Naive thymus-derived CD4-positive, alpha-beta T cell (primary cell): ENCODE measurements at regions of chr5 and their contacts with region 1.

Region 1: GRCh38 chr5:69369369-69370121 is at the starts of genes AK6, RAD17 and TAF9:
- DNase-seq: peak; percentile 90 to 99 (median 95)
- ATAC-seq: peak; percentile 95
- H3K4me3 ChIP-seq: peak within 1 kb of the TSS; percentile 97
- H3K4me3 Mint-ChIP-seq: peak within 1 kb of the TSS; percentile 91 to 100 (median 97)
- H3K27ac ChIP-seq: peak within 1 kb of the TSS; percentile 99
- H3K27ac Mint-ChIP-seq: peak within 1 kb of the TSS; percentile 95 to 100 (median 99)
- H3K4me1 ChIP-seq: peaks cover 18 to 20% of the 10 kb centered on the region in 2 donors
- H3K4me1 Mint-ChIP-seq: peaks cover 20 to 63% (median 51%) of the 10 kb centered on the region in 7 donors
- H3K27me3 ChIP-seq: no peaks in the 10 kb centered on the region
- H3K27me3 Mint-ChIP-seq: no peaks in the 10 kb centered on the region
- total RNA-seq, gene AK6: 12.4 to 30.2 (median 24.0) TPM
- total RNA-seq, gene RAD17: 19.7 to 32.0 (median 26.3) TPM
- total RNA-seq, gene TAF9: 48.5 to 54.1 (median 50.4) TPM

Region 2: GRCh38 chr5:69042915-69043658 is 326.5 kb before region 1 on chr5:
- CTCF ChIA-PET with region 1: interaction called, 3 read pairs
- POLR2A ChIA-PET with region 1: no interaction called
- intact Hi-C with region 1: loop called (anchors 1 kb)
- DNase-seq: peak; percentile 42 to 93 (median 88)
- ATAC-seq: peak; percentile 100
- H3K4me3 ChIP-seq: peak overlapping the region; percentile 72
- H3K4me3 Mint-ChIP-seq: peak overlapping the region; percentile 74 to 93 (median 88)
- H3K27ac ChIP-seq: peak overlapping the region; percentile 74
- H3K27ac Mint-ChIP-seq: peak overlapping the region; percentile 70 to 96 (median 92)
- H3K4me1 ChIP-seq: no peaks in the 10 kb centered on the region
- H3K4me1 Mint-ChIP-seq: peaks cover 0 to 14% (median 6%) of the 10 kb centered on the region in 7 donors
- H3K27me3 ChIP-seq: no peaks in the 10 kb centered on the region
- H3K27me3 Mint-ChIP-seq: peaks cover 0 to 5% (median 0%) of the 10 kb centered on the region in 5 donors

Region 3: GRCh38 chr5:69166686-69167492 is 202.7 kb before region 1 on chr5 and contains the start of gene CCNB1:
- CTCF ChIA-PET with region 1: no interaction called
- POLR2A ChIA-PET with region 1: interaction called, 3 read pairs
- intact Hi-C with region 1: loop called (anchors 1 kb)
- DNase-seq: peak; percentile 91 to 98 (median 94)
- ATAC-seq: peak; percentile 100
- H3K4me3 ChIP-seq: peak within 1 kb of the TSS; percentile 78
- H3K4me3 Mint-ChIP-seq: peak within 1 kb of the TSS; percentile 88 to 98 (median 94)
- H3K27ac ChIP-seq: peak within 1 kb of the TSS; percentile 68
- H3K27ac Mint-ChIP-seq: peak within 1 kb of the TSS; percentile 77 to 94 (median 90)
- H3K4me1 ChIP-seq: peaks cover 5 to 15% of the 10 kb centered on the region in 2 donors
- H3K4me1 Mint-ChIP-seq: peaks cover 17 to 44% (median 26%) of the 10 kb centered on the region in 7 donors
- H3K27me3 ChIP-seq: no peaks in the 10 kb centered on the region
- H3K27me3 Mint-ChIP-seq: no peaks in the 10 kb centered on the region
- total RNA-seq, gene CCNB1: 1.3 to 110 (median 3.4) TPM

Region 4: DNA sequence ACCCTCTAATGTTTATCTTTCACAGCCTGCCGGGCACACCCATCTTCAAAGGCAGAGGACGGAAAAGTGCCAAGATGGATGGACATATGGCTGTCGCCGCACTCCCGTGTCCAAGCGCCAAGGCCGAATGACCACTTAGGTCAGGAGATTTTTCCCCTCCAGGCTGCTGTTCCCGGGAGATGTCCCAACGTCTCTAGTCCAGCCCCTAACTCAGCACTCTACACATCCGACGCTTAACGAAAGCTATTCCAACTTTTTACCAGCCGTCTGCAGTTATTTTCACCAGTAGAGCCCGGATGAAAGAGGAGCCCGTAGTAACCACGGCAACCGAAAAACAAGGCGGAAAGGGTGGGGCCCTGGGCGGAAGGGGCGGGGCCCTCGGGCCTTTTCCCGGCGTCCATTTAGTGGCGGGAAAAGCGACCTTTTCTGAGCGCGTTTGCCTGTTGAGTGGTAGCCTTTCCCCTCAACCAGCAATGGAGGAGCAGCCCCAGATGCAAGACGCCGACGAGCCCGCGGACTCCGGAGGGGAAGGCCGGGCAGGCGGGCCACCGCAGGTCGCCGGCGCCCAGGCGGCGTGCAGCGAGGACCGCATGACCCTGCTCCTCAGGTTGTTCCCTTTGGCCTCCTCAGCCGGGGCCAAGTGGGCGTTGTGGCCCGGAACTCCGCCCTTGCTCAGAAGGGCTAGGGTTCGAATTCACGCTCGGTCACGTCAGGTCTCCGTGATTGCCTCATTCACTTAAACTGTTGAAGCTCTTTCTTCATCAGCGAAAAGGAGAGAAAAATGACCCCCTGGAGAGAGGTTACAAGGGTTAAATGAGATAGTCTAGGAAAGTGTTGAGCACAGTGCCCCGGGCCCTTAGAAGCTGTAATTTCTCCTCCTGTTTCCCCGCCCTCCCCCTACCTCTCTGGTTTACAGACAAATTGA is 180.1 kb before region 1 on chr5 and contains the start of gene CENPH:
- CTCF ChIA-PET with region 1: no interaction called
- POLR2A ChIA-PET with region 1: interaction called, 3 read pairs
- intact Hi-C with region 1: loop called (anchors 1 kb)
- DNase-seq: peak; percentile 83 to 92 (median 90)
- ATAC-seq: peak; percentile 99
- H3K4me3 ChIP-seq: peak within 1 kb of the TSS; percentile 99
- H3K4me3 Mint-ChIP-seq: peak within 1 kb of the TSS; percentile 86 to 96 (median 92)
- H3K27ac ChIP-seq: peak within 1 kb of the TSS; percentile 75
- H3K27ac Mint-ChIP-seq: peak within 1 kb of the TSS; percentile 85 to 96 (median 92)
- H3K4me1 ChIP-seq: peaks cover 9 to 11% of the 10 kb centered on the region in 2 donors
- H3K4me1 Mint-ChIP-seq: peaks cover 0 to 19% (median 16%) of the 10 kb centered on the region in 7 donors
- H3K27me3 ChIP-seq: no peaks in the 10 kb centered on the region
- H3K27me3 Mint-ChIP-seq: no peaks in the 10 kb centered on the region
- total RNA-seq, gene CENPH: 3.4 to 25.3 (median 8.2) TPM

Region 5: DNA sequence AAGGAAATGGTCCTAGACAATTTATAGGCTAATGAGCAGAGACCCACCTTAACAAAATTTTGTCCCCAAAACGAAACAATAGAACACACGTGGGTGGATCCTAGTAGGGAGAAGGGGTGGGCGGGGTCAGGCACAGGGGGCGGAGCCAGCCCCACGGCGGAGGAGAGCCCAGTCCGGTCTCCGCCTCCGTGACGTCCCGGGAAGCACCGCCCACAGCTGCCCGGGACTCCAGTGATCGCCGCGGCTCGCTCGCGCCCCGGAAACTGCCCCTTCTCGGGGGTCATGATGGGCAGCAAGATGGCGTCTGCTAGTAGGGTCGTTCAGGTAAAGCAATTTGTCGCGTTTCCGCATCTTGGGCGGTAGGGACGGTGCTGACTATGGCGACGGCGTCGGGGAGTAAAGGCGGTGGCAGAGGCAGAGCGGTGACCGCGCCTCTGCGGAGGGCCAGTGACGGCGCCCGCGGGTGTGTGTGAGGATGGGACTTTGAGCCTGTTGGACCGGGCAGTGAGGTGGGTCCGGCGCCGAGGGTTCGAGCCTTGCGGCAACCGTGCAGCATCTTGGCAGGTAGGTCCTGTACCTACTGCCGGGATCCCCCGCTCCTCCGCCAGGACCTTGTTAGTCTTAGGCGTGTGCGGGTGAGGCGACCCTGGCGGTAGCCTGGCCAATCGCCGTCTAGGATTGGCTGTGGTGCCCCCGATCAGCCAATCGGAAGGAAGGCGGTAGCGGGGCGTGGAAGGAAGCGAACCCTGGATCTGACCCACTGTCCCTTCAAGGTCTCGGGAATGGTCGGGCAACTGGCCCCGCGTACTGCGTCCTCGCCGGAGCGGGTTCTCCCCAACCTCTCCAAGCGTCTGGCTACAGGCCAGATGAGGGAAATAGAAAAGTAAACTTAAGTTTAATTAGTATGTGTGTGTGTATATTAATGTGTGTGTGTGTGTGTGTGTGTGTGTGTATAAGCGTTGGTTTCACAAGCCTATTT is 151.7 kb before region 1 on chr5:
- CTCF ChIA-PET with region 1: no interaction called
- POLR2A ChIA-PET with region 1: no interaction called
- intact Hi-C with region 1: loop called (anchors 1 kb)
- DNase-seq: peak; percentile 81 to 93 (median 86)
- ATAC-seq: peak; percentile 97
- H3K4me3 ChIP-seq: peak overlapping the region; percentile 100
- H3K4me3 Mint-ChIP-seq: peak overlapping the region; percentile 95 to 99 (median 96)
- H3K27ac ChIP-seq: peak overlapping the region; percentile 92
- H3K27ac Mint-ChIP-seq: peak overlapping the region; percentile 96 to 99 (median 97)
- H3K4me1 ChIP-seq: peaks cover 5 to 8% of the 10 kb centered on the region in 2 donors
- H3K4me1 Mint-ChIP-seq: peaks cover 2 to 37% (median 29%) of the 10 kb centered on the region in 7 donors
- H3K27me3 ChIP-seq: no peaks in the 10 kb centered on the region
- H3K27me3 Mint-ChIP-seq: no peaks in the 10 kb centered on the region

Region 6: GRCh38 chr5:69250598-69250997 is 118.9 kb before region 1 on chr5:
- CTCF ChIA-PET with region 1: no interaction called
- POLR2A ChIA-PET with region 1: no interaction called
- intact Hi-C with region 1: no loop called
- DNase-seq: no peak
- ATAC-seq: no peak
- H3K4me3 ChIP-seq: no peak overlapping the region
- H3K4me3 Mint-ChIP-seq: no peak overlapping the region
- H3K27ac ChIP-seq: no peak overlapping the region
- H3K27ac Mint-ChIP-seq: peak overlapping the region in 1 of 9 donors; percentile 86
- H3K4me1 ChIP-seq: no peaks in the 10 kb centered on the region
- H3K4me1 Mint-ChIP-seq: peaks cover 5 to 34% (median 24%) of the 10 kb centered on the region in 7 donors
- H3K27me3 ChIP-seq: no peaks in the 10 kb centered on the region
- H3K27me3 Mint-ChIP-seq: no peaks in the 10 kb centered on the region